ENCODE measurements at regions of chr10 and their contacts with region 1.

Region 1: GRCh38 chr10:4663162-4663904 is 162.7 kb upstream of the AKR1E2 start:
- DNase-seq: peak; percentile 94 to 95
- ATAC-seq: peak; percentile 78 to 83
- H3K4me3 ChIP-seq: peak overlapping the region in 3 of 4 donors; percentile 5 to 28 (median 22)
- H3K27ac ChIP-seq: peak overlapping the region; percentile 91 to 99 (median 96)
- H3K4me1 ChIP-seq: peaks cover 41 to 51% of the 10 kb centered on the region in 2 donors
- H3K27me3 ChIP-seq: no peaks in the 10 kb centered on the region
- CTCF ChIP-seq: no peak
- POLR2A ChIP-seq: peak; percentile 66 to 77

Region 2: GRCh38 chr10:3239066-3239919 is 1424.0 kb before region 1 on chr10:
- in situ Hi-C with region 1: loop called in 2 of 4 experiments (anchors 25 kb)
- intact Hi-C with region 1: loop called (anchors 5 kb)
- DNase-seq: peak; percentile 38 to 46
- ATAC-seq: peak; percentile 80 to 90
- H3K4me3 ChIP-seq: no peak overlapping the region
- H3K27ac ChIP-seq: peak overlapping the region in 3 of 4 donors; percentile 56 to 66 (median 59)
- H3K4me1 ChIP-seq: no peaks in the 10 kb centered on the region
- H3K27me3 ChIP-seq: no peaks in the 10 kb centered on the region
- CTCF ChIP-seq: peak; percentile 78 to 91 (median 86)
- POLR2A ChIP-seq: no peak

Region 3: DNA sequence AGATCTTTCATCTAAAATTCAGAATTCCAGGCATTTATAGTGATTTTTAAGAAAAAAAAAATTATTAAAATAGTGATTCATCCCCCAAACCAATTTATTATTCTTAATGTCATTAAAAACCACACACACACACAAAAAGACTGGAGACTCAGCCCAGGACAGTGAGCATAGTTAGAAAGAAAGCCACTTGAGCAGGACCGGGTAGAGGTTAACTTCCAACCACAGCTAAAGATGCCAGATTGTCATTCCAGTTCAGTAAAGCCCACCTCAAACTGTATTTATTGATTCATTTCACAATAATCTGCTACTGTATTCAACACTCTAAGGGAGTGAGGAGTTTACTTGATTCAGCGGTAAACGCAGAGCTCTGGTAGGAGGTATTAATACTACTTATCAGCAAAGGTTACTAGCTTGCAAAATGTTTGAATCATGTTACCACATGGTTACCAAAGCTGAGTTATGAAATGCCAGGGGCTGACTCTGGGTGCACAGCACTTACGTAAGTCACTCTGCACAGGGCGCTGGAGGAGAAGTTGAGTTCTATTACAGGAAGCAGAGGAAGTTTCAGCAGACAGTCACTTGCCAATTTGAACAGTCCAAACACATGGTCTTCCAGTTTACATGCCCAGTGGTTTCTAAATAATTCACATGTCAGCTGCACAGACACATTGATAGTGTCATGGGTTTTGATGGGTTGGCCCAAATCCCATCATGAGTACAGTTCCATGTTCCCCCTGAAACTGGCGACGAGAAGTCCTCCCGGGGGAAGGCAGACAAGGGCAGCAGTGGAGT is 942.9 kb before region 1 on chr10:
- in situ Hi-C with region 1: no loop called
- intact Hi-C with region 1: loop called (anchors 2 kb)
- DNase-seq: peak; percentile 84 to 91
- ATAC-seq: peak; percentile 96 to 97
- H3K4me3 ChIP-seq: no peak overlapping the region
- H3K27ac ChIP-seq: peak overlapping the region; percentile 59 to 86 (median 78)
- H3K4me1 ChIP-seq: peaks cover 5% of the 10 kb centered on the region in 2 donors
- H3K27me3 ChIP-seq: no peaks in the 10 kb centered on the region
- CTCF ChIP-seq: no peak
- POLR2A ChIP-seq: peak; percentile 27 to 57

Region 4: DNA sequence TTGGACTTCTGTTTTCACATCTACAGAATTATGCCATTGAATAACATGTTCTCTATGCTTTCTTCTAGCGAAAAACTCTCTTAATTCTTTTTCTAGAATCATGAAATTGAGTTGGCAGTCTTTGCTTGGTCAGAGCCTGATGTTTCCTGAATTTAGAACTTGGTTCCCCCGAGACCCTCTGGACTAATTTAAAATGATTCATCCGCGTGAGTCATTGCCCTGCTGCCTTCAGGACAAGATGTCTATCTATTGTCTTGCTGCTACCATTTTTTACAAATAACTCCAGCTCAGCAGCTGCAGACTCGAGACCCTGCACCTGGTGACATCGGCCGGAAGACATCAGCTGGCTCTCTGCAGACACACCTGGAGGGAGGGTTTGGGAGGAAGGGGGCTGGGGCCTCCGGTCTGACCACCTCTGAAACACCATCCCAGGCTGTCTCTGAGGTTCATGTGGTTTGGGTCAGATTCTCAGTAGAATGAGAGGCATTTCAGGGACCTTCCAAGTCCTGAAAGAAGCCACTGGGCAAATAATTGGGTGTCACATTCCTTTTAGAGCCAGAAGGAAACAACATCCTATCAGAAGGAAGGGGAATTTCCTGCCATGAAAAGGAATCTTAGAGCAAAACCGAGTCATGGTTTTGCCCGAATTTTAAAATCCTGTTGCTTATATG is 857.4 kb before region 1 on chr10:
- in situ Hi-C with region 1: loop called in 2 of 4 experiments (anchors 5 to 25 kb)
- intact Hi-C with region 1: loop called (anchors 1 kb)
- DNase-seq: peak in 1 of 2 donors; percentile 66
- ATAC-seq: peak in 1 of 2 donors; percentile 7
- H3K4me3 ChIP-seq: peak overlapping the region; percentile 5 to 23 (median 12)
- H3K27ac ChIP-seq: peak overlapping the region; percentile 85 to 96 (median 90)
- H3K4me1 ChIP-seq: peaks cover 72 to 78% of the 10 kb centered on the region in 2 donors
- H3K27me3 ChIP-seq: no peaks in the 10 kb centered on the region
- CTCF ChIP-seq: no peak
- POLR2A ChIP-seq: no peak

Region 5: GRCh38 chr10:4241724-4242345 is 421.5 kb before region 1 on chr10:
- in situ Hi-C with region 1: no loop called
- intact Hi-C with region 1: loop called (anchors 5 kb)
- DNase-seq: no peak
- ATAC-seq: peak; percentile 35 to 46
- H3K4me3 ChIP-seq: peak overlapping the region; percentile 10 to 50 (median 41)
- H3K27ac ChIP-seq: peak overlapping the region; percentile 69 to 83 (median 76)
- H3K4me1 ChIP-seq: peaks cover 11 to 33% of the 10 kb centered on the region in 2 donors
- H3K27me3 ChIP-seq: no peaks in the 10 kb centered on the region
- CTCF ChIP-seq: no peak
- POLR2A ChIP-seq: peak in 1 of 2 donors; percentile 8

Region 6: GRCh38 chr10:6195846-6196245 is 1532.5 kb after region 1 on chr10:
- in situ Hi-C with region 1: loop called in 1 of 4 experiments (anchors 25 kb)
- intact Hi-C with region 1: no loop called
- DNase-seq: no peak
- ATAC-seq: no peak
- H3K4me3 ChIP-seq: no peak overlapping the region
- H3K27ac ChIP-seq: peak overlapping the region; percentile 89 to 98 (median 95)
- H3K4me1 ChIP-seq: peaks cover 76 to 82% of the 10 kb centered on the region in 2 donors
- H3K27me3 ChIP-seq: no peaks in the 10 kb centered on the region
- CTCF ChIP-seq: no peak
- POLR2A ChIP-seq: peak in 1 of 2 donors; percentile 14